HEK293 (cell line): ENCODE measurements at regions of chr12 and their contacts with region 1.

Region 1: DNA sequence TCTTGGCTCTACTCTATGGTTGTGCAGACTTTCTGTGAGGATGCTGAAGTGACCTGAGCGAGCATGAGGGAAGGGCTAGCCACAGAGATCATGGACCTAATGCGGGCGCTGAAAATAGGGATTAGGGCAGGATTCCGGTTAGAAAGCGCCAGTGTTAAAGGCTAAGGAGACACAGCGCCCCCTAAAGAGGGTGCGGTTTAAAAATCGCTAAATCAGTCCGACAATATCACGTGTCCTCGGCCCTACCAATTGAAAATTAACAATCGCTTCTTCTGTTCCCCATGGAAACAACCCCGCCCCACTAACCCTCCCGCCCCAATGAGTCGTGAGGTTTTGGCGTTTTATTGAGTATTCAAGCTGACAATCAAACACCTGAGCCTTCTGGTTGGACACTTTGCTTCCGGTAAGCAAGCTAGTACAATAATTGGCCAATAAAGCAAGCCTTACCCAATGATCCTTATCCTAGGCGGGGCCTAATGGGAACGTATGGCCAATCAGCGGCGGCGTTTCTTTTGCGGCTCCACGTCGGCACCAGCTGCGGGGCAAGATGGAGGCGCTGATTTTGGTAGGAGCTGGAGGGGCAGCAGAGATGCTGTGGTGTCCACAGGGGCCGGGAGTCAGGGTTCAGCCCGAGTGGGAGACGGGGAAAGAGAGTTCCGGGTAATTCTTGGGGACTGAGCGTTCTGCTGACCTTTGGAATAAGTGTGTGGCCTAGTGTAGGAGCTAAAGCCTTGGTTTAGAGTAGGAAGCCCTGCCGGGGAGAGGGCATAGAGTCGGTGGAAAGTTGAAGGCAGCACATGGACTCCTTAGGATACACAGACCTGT is at the start of gene COPZ1:
- H3K4me3 ChIP-seq: peak within 1 kb of the TSS; percentile 88
- H3K27ac ChIP-seq: peak within 1 kb of the TSS; percentile 70
- H3K4me1 ChIP-seq: no peaks in the 10 kb centered on the region; the same call in 1 of the 2 replicates
- CTCF ChIP-seq: peak; percentile 84

Region 2: GRCh38 chr12:54251667-54252284 is 73.1 kb before region 1 on chr12:
- CTCF ChIA-PET with region 1: interaction called, 17 read pairs
- POLR2A ChIA-PET with region 1: interaction called, 4 read pairs
- H3K4me3 ChIP-seq: no peak overlapping the region
- H3K27ac ChIP-seq: no peak overlapping the region
- H3K4me1 ChIP-seq: no peaks in the 10 kb centered on the region
- CTCF ChIP-seq: no peak

Region 3: DNA sequence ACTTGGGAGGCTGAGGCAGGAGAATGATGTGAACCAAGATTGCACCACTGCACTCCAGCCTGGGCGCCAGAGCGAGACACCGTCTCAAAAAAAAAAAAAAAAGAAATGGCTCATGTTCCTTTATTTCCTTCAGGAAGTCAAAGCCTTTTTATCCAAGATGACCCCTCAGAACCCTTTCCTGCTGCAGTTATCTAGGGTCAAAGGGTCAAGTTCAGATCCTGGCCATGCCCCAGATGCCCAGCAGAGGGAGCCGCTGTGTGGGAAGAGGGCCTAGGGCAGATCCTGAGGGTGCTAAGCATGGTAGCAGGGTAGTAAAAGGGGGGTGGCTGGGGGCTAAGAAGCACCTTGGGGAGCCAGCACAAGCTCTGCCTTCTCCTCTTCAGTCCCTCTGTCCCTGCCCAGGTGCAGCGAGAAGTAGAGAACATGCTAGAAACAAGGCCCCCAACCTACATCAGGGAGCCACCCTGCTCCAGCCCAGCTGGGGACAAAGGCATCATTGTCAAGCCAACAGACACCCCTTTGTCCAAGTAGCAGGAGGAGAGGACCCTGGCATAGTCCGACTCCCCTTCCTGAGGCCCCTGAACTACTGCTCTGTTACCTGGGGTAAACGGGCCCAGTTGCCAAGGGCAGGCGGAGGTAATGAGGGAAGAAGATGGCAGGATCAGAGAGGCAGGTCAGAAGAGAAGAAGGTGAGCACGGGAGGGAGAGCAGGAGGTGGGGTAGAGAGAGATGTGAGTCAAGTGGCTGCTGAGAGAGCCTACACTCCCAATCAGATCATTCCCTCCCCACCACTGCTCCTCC is 30.5 kb before region 1 on chr12:
- CTCF ChIA-PET with region 1: interaction called, 63 read pairs
- POLR2A ChIA-PET with region 1: interaction called, 37 read pairs
- H3K4me3 ChIP-seq: no peak overlapping the region
- H3K27ac ChIP-seq: no peak overlapping the region
- H3K4me1 ChIP-seq: no peaks in the 10 kb centered on the region
- CTCF ChIP-seq: peak; percentile 69

Region 4: GRCh38 chr12:54306925-54307741 is 17.7 kb before region 1 on chr12:
- CTCF ChIA-PET with region 1: interaction called, 31 read pairs
- POLR2A ChIA-PET with region 1: interaction called, 17 read pairs
- H3K4me3 ChIP-seq: no peak overlapping the region
- H3K27ac ChIP-seq: no peak overlapping the region
- H3K4me1 ChIP-seq: peaks cover 8% of the 10 kb centered on the region
- CTCF ChIP-seq: no peak

Region 5: DNA sequence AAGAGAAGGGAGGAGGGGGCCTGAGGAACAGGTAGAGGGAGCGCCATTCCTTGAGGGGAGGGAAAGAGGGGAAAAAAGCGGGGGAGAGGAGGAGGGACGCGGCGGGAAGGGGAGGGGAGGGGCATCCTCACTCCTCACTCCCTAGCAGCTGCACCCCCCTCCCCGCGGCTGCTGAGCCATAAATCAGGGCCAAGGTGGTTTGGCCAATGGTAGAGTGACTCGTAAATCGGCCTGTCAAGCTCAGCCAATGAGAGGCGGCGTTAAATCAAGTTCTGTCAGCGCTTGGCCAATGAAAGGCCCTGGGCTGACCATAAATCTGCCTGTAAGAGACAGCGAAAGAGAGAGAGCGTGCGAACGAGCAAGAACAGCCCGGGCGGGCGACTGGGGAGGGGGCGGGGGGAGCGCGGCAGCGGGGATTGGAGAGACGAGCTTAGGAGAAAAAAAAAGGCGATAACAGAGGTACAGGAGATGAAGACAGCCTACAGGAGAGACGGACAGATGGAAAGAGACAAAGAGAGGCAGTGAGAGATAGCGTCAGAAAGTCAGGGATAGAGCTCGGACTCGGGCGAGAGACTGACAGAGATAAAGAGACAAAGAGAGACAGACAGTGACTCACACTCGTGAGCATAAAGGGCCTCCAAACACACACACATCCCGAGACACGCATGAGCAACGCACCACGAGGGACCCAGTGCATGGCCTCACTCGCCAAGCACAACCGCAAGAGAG is 34.4 kb after region 1 on chr12:
- CTCF ChIA-PET with region 1: interaction called, 15 read pairs
- POLR2A ChIA-PET with region 1: interaction called, 13 read pairs
- H3K4me3 ChIP-seq: peak overlapping the region; percentile 62
- H3K27ac ChIP-seq: peak overlapping the region; percentile 80
- H3K4me1 ChIP-seq: peaks cover 12% of the 10 kb centered on the region
- CTCF ChIP-seq: no peak